ENCODE measurements at regions of chr19 and their contacts with region 1.

Region 1: DNA sequence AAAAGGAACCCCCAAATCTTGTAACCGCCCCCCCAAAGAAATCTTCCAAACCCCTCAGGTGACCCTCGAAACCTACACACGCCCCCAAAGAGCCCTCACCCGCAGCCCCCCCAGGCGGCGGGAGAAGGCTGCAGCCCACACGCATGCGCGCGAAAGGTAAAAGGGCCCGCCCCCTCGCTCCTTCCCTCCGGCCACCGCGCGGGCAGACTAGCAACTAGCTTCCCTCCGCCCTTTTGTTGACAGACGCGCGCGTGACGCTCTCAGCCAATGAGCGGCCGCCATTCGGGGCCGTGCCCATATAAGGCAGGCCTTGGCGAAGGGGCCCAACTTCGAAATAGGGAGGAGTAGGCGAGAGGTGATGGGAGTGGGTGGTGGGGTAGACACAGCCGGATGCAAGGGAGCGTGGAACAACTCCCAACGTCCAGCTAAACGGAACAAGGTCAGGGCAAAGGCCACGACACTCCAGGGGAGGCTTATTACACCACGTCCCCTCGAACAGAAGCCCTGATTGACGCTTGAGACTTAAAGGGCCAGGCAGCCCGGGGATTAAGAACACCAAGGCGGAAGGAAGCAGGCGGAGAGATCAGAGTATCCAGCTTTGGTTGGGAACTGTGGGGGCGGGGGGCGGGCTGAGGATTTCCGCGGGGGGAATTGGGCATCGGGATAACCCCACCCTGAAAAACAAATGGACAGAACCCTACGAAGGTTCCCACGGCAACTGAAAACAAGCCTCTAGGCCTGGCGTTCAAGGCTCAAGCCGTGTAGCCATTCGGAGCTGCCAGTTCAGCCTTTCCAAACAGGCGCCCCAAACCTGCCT is 13.3 kb downstream of the FBXO46 start:
- DNase-seq: peak; percentile 96 to 99 (median 97)
- ATAC-seq: peak; percentile 95
- H3K4me3 ChIP-seq: peak overlapping the region; percentile 60 to 85
- H3K4me3 Mint-ChIP-seq: peak overlapping the region; percentile 97
- H3K27ac ChIP-seq: peak overlapping the region; percentile 73 to 95
- H3K27ac Mint-ChIP-seq: peak overlapping the region; percentile 97
- H3K4me1 ChIP-seq: peaks cover 21% of the 10 kb centered on the region
- H3K4me1 Mint-ChIP-seq: peaks cover 44% of the 10 kb centered on the region
- H3K27me3 ChIP-seq: no peaks in the 10 kb centered on the region
- H3K27me3 Mint-ChIP-seq: no peaks in the 10 kb centered on the region
- CTCF ChIP-seq: no peak

Region 2: DNA sequence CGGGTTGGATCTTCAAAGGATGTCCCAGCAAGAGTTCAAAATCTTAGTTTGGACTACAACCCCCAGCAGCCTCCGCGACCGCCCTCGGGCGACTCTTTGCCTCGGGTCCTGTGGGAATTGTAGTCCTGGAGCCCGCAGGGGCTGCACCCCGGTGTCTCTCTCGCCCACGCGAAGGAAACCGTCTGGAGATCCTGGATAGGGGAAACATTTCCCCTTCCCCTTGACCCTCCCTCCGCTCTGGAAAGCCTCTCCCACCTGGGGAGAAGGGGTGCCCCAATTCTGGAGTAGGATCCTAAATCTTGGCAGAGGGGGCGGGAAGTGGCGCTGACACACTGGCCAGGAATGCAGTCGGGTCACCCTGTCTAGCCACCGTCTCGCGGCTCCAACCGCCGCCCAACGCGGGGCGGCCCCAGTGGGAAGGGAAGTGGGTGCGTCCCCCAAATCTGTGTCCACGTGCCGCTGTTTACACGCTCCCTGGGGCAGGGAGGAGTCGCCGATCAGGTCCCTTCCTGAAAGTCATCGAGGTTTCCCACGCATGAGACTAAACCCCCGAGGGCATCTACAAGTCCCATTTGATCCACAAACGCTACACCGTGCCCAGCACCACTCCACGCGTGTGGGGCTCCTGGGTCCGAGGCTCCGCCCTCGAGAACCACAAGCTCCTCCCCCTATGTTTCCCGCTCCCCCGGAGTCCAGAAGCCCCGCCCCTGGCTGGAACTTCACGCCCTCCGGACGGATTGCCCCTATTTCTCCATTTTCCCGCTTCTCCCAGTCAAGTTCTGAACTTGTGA is 311.7 kb before region 1 on chr19:
- CTCF ChIA-PET with region 1: no interaction called
- POLR2A ChIA-PET with region 1: no interaction called
- intact Hi-C with region 1: loop called (anchors 1 kb)
- DNase-seq: peak; percentile 69 to 89 (median 85)
- ATAC-seq: peak; percentile 63
- H3K4me3 ChIP-seq: peak overlapping the region; percentile 63 to 85
- H3K4me3 Mint-ChIP-seq: peak overlapping the region; percentile 97
- H3K27ac ChIP-seq: peak overlapping the region; percentile 68 to 92
- H3K27ac Mint-ChIP-seq: peak overlapping the region; percentile 95
- H3K4me1 ChIP-seq: peaks cover 25% of the 10 kb centered on the region
- H3K4me1 Mint-ChIP-seq: peaks cover 31% of the 10 kb centered on the region
- H3K27me3 ChIP-seq: peaks cover 16 to 26% of the 10 kb centered on the region in 2 experiments
- H3K27me3 Mint-ChIP-seq: peaks cover 26% of the 10 kb centered on the region
- CTCF ChIP-seq: no peak

Region 3: DNA sequence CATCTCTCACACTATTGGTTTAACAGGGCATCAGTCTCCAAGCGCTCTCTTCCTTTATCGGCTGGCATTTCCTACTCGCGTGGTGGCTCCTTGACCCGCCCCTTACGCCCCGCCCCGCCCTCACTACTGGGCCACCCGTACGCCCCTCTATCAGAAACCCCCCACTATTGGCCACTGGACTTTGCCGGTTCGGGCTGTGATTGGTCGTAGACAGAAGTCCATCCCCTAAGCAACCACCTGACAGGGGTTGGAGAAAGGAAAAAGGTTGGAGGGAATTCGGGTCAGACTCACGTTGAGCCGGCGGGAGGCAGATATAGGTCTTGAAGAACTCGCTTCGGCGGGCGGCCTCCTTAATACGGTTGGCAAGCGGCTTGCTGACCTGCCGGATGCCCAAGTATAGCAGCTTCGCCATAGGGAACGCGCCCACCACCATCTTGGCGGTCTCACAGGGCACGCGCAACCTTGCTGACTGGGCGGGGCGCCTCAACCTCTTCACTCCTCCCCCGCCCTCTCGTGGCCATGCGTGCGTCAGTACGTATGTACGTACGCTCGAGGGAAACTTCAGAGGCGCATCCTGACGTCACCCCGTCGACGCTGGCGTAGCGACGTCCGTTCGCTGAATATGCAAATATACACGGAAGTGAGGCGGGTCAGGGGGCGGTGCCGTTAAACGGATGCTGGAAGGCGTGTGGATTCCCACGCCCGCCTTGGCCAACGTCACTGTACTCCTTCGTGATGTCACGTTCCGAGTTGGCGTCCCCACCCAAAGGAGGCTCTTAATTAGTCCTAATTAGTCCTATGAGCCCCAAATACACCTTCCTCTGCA is 132.8 kb before region 1 on chr19 and contains the start of gene OPA3:
- CTCF ChIA-PET with region 1: no interaction called
- POLR2A ChIA-PET with region 1: interaction called, 4 read pairs
- intact Hi-C with region 1: loop called in 1 of 2 experiments (anchors 1 kb)
- DNase-seq: peak; percentile 97 to 100 (median 99)
- ATAC-seq: peak; percentile 86
- H3K4me3 ChIP-seq: peak within 1 kb of the TSS; percentile 80 to 86
- H3K4me3 Mint-ChIP-seq: peak within 1 kb of the TSS; percentile 96
- H3K27ac ChIP-seq: peak within 1 kb of the TSS; percentile 95 to 99
- H3K27ac Mint-ChIP-seq: peak within 1 kb of the TSS; percentile 99
- H3K4me1 ChIP-seq: peaks cover 6% of the 10 kb centered on the region
- H3K4me1 Mint-ChIP-seq: peaks cover 19% of the 10 kb centered on the region
- H3K27me3 ChIP-seq: no peaks in the 10 kb centered on the region
- H3K27me3 Mint-ChIP-seq: peaks cover 7% of the 10 kb centered on the region
- CTCF ChIP-seq: no peak
- total RNA-seq, gene OPA3: 5.6 to 5.7 TPM

Region 4: GRCh38 chr19:45730389-45731288 is 13.3 kb after region 1 on chr19 and contains the start of gene FBXO46:
- CTCF ChIA-PET with region 1: interaction called, 4 read pairs
- POLR2A ChIA-PET with region 1: interaction called, 23 read pairs
- intact Hi-C with region 1: loop called (anchors 1 kb)
- DNase-seq: peak; percentile 82 to 97 (median 92)
- ATAC-seq: peak; percentile 98
- H3K4me3 ChIP-seq: peak within 1 kb of the TSS; percentile 74 to 91
- H3K4me3 Mint-ChIP-seq: peak within 1 kb of the TSS; percentile 97
- H3K27ac ChIP-seq: peak within 1 kb of the TSS; percentile 67 to 78
- H3K27ac Mint-ChIP-seq: peak within 1 kb of the TSS; percentile 92
- H3K4me1 ChIP-seq: peaks cover 19% of the 10 kb centered on the region
- H3K4me1 Mint-ChIP-seq: peaks cover 32% of the 10 kb centered on the region
- H3K27me3 ChIP-seq: no peaks in the 10 kb centered on the region
- H3K27me3 Mint-ChIP-seq: no peaks in the 10 kb centered on the region
- CTCF ChIP-seq: no peak
- total RNA-seq, gene FBXO46: 15.2 to 17.1 TPM

Region 5: GRCh38 chr19:45753546-45753945 is 36.2 kb after region 1 on chr19:
- CTCF ChIA-PET with region 1: no interaction called
- POLR2A ChIA-PET with region 1: no interaction called
- intact Hi-C with region 1: no loop called
- DNase-seq: no peak
- ATAC-seq: no peak
- H3K4me3 ChIP-seq: no peak overlapping the region
- H3K4me3 Mint-ChIP-seq: no peak overlapping the region
- H3K27ac ChIP-seq: no peak overlapping the region
- H3K27ac Mint-ChIP-seq: no peak overlapping the region
- H3K4me1 ChIP-seq: no peaks in the 10 kb centered on the region
- H3K4me1 Mint-ChIP-seq: no peaks in the 10 kb centered on the region
- H3K27me3 ChIP-seq: no peaks in the 10 kb centered on the region
- H3K27me3 Mint-ChIP-seq: no peaks in the 10 kb centered on the region
- CTCF ChIP-seq: no peak

Region 6: GRCh38 chr19:45792470-45793177 is 75.2 kb after region 1 on chr19 and contains the start of gene DMWD:
- CTCF ChIA-PET with region 1: no interaction called
- POLR2A ChIA-PET with region 1: no interaction called
- intact Hi-C with region 1: loop called (anchors 1 kb)
- DNase-seq: peak; percentile 99 to 100 (median 99)
- ATAC-seq: peak; percentile 96
- H3K4me3 ChIP-seq: peak within 1 kb of the TSS; percentile 55 to 62
- H3K4me3 Mint-ChIP-seq: peak within 1 kb of the TSS; percentile 90
- H3K27ac ChIP-seq: peak within 1 kb of the TSS; percentile 37 to 63
- H3K27ac Mint-ChIP-seq: peak within 1 kb of the TSS; percentile 75
- H3K4me1 ChIP-seq: peaks cover 28% of the 10 kb centered on the region
- H3K4me1 Mint-ChIP-seq: peaks cover 37% of the 10 kb centered on the region
- H3K27me3 ChIP-seq: peaks cover 3 to 6% of the 10 kb centered on the region in 2 experiments
- H3K27me3 Mint-ChIP-seq: peaks cover 18% of the 10 kb centered on the region
- CTCF ChIP-seq: no peak
- total RNA-seq, gene DMWD: 23.8 to 25.5 TPM

Region 7: GRCh38 chr19:45902651-45903625 is 185.6 kb after region 1 on chr19:
- CTCF ChIA-PET with region 1: no interaction called
- POLR2A ChIA-PET with region 1: no interaction called
- intact Hi-C with region 1: loop called (anchors 1 to 5 kb)
- DNase-seq: peak; percentile 98 to 100 (median 99)
- ATAC-seq: peak; percentile 82
- H3K4me3 ChIP-seq: peak overlapping the region; percentile 76 to 83
- H3K4me3 Mint-ChIP-seq: peak overlapping the region; percentile 92
- H3K27ac ChIP-seq: peak overlapping the region; percentile 64 to 77
- H3K27ac Mint-ChIP-seq: peak overlapping the region; percentile 72
- H3K4me1 ChIP-seq: peaks cover 17% of the 10 kb centered on the region
- H3K4me1 Mint-ChIP-seq: peaks cover 26% of the 10 kb centered on the region
- H3K27me3 ChIP-seq: no peaks in the 10 kb centered on the region
- H3K27me3 Mint-ChIP-seq: no peaks in the 10 kb centered on the region
- CTCF ChIP-seq: no peak

Region 8: GRCh38 chr19:45960595-45961235 is 243.3 kb after region 1 on chr19:
- CTCF ChIA-PET with region 1: no interaction called
- POLR2A ChIA-PET with region 1: no interaction called
- intact Hi-C with region 1: no loop called
- DNase-seq: no peak
- ATAC-seq: no peak
- H3K4me3 ChIP-seq: no peak overlapping the region
- H3K4me3 Mint-ChIP-seq: no peak overlapping the region
- H3K27ac ChIP-seq: no peak overlapping the region
- H3K27ac Mint-ChIP-seq: no peak overlapping the region
- H3K4me1 ChIP-seq: no peaks in the 10 kb centered on the region
- H3K4me1 Mint-ChIP-seq: no peaks in the 10 kb centered on the region
- H3K27me3 ChIP-seq: peaks cover 5 to 15% of the 10 kb centered on the region in 2 experiments
- H3K27me3 Mint-ChIP-seq: peaks cover 55% of the 10 kb centered on the region
- CTCF ChIP-seq: no peak

Measured in CD8-positive, alpha-beta T cell (primary cell).